ENCODE measurements at regions of chr12 and their contacts with region 1.

Region 1: DNA sequence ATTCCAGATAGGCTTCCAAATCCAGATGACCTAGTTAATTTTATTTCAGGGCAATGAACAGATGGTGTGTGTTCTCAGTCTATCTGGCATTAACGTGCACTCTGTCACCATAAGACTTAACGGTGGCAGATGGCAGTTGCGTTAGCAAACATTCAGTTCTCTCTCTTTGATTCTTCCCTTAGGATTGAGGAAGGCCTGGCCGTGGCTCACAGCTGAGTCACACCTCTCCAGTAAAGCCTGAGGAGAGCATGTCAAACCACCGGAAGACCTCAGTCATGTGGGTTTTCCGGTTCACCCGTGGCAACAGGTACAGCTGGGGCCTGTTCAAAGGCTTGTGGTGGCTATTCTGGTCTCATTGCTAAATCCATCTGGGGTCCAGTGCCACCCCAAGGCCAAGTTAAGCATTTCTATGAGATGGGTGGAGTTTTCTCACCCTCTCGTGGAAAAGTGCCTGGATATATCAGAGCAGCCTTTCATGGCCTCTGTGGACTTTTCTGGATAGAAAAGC is 545.1 kb upstream of the ATP2B1 start:
- DNase-seq: peak; percentile 90
- H3K4me3 ChIP-seq: no peak overlapping the region
- H3K27ac ChIP-seq: peak overlapping the region; percentile 47
- H3K4me1 ChIP-seq: peaks cover 21% of the 10 kb centered on the region
- H3K27me3 ChIP-seq: no peaks in the 10 kb centered on the region
- CTCF ChIP-seq: peak; percentile 20 to 53
- POLR2A ChIP-seq: no peak

Region 2: GRCh38 chr12:89949457-89950195 is 304.1 kb before region 1 on chr12:
- CTCF ChIA-PET with region 1: no interaction called
- POLR2A ChIA-PET with region 1: no interaction called
- dilution Hi-C with region 1: no loop called
- intact Hi-C with region 1: loop called (anchors 1 kb)
- DNase-seq: peak; percentile 98
- H3K4me3 ChIP-seq: no peak overlapping the region
- H3K27ac ChIP-seq: peak overlapping the region; percentile 99
- H3K4me1 ChIP-seq: peaks cover 33% of the 10 kb centered on the region
- H3K27me3 ChIP-seq: no peaks in the 10 kb centered on the region
- CTCF ChIP-seq: peak; percentile 21 to 36
- POLR2A ChIP-seq: no peak

Region 3: DNA sequence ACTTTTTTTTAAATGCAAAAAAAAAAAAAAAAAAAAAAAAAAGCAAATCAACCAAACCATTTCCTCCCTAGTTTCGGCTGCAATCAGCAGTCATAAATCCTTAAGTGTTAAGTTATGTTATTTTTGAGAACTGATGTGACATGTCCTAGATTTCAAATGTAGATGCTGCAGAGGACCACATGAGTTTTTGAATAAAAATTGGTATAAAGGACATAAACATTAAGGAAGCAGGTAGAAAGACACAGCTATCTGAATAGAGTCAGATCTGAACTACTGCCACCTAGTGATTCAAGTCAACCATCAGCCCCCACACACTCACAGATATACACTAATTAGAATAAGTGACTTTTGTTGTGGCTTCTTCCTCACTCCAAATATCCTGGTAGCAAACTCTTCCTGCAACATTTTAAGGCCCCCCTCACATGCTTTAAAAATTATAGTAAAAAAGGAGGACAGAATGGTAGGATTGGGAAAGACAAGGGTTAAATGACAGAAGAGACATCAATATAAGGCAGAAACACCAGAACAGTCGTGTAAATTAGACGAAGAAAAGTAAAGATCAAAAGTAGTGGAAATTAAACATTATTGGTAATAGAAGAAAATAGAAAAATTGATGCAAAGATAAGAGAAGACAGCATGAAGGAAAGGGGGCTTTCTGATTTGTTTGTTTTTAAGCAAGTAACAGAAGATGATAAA is 150.6 kb before region 1 on chr12:
- CTCF ChIA-PET with region 1: interaction called, 4 read pairs
- POLR2A ChIA-PET with region 1: no interaction called
- dilution Hi-C with region 1: no loop called
- intact Hi-C with region 1: loop called (anchors 5 kb)
- DNase-seq: peak; percentile 63
- H3K4me3 ChIP-seq: no peak overlapping the region
- H3K27ac ChIP-seq: no peak overlapping the region
- H3K4me1 ChIP-seq: no peaks in the 10 kb centered on the region
- H3K27me3 ChIP-seq: no peaks in the 10 kb centered on the region
- CTCF ChIP-seq: peak; percentile 34 to 54
- POLR2A ChIP-seq: no peak

Region 4: GRCh38 chr12:90211017-90211416 is 42.7 kb before region 1 on chr12:
- CTCF ChIA-PET with region 1: no interaction called
- POLR2A ChIA-PET with region 1: no interaction called
- dilution Hi-C with region 1: no loop called
- intact Hi-C with region 1: loop called (anchors 1 kb)
- DNase-seq: peak; percentile 96
- H3K4me3 ChIP-seq: no peak overlapping the region
- H3K27ac ChIP-seq: peak overlapping the region; percentile 85
- H3K4me1 ChIP-seq: peaks cover 16% of the 10 kb centered on the region
- H3K27me3 ChIP-seq: no peaks in the 10 kb centered on the region
- CTCF ChIP-seq: no peak
- POLR2A ChIP-seq: peak; percentile 62

Region 5: DNA sequence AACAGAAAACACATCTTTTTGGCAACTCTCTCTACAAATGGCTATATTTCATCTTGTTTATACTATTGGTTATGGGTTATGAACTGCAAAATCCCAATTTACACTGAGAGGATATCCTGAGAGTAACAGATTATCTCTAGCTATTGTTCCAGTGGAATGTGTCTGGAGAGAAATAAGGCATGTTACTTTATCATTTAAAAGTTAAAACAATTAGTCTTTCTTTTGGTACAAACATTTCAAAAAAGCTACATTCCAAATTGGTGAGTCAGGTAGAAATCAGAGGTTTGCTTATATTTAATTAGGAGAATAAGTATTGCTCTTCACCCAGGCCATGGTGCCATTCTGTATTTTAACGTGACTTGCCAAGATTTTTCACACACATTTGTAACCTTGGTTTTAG is 289.6 kb after region 1 on chr12:
- CTCF ChIA-PET with region 1: no interaction called
- POLR2A ChIA-PET with region 1: no interaction called
- dilution Hi-C with region 1: no loop called
- intact Hi-C with region 1: loop called (anchors 5 kb)
- DNase-seq: peak; percentile 93
- H3K4me3 ChIP-seq: no peak overlapping the region
- H3K27ac ChIP-seq: peak overlapping the region; percentile 97
- H3K4me1 ChIP-seq: peaks cover 18% of the 10 kb centered on the region
- H3K27me3 ChIP-seq: no peaks in the 10 kb centered on the region
- CTCF ChIP-seq: no peak
- POLR2A ChIP-seq: peak; percentile 55

Region 6: GRCh38 chr12:90909069-90909770 is 655.5 kb after region 1 on chr12:
- CTCF ChIA-PET with region 1: no interaction called
- POLR2A ChIA-PET with region 1: no interaction called
- dilution Hi-C with region 1: no loop called
- intact Hi-C with region 1: loop called (anchors 1 kb)
- DNase-seq: peak; percentile 67
- H3K4me3 ChIP-seq: no peak overlapping the region
- H3K27ac ChIP-seq: no peak overlapping the region
- H3K4me1 ChIP-seq: no peaks in the 10 kb centered on the region
- H3K27me3 ChIP-seq: no peaks in the 10 kb centered on the region
- CTCF ChIP-seq: peak; percentile 69 to 71
- POLR2A ChIP-seq: no peak